Activated naive CD4-positive, alpha-beta T cell treated with anti-CD3 and anti-CD28 coated beads for 36 hours (primary cell): ENCODE measurements at regions of chr2 and their contacts with region 1.

Region 1: DNA sequence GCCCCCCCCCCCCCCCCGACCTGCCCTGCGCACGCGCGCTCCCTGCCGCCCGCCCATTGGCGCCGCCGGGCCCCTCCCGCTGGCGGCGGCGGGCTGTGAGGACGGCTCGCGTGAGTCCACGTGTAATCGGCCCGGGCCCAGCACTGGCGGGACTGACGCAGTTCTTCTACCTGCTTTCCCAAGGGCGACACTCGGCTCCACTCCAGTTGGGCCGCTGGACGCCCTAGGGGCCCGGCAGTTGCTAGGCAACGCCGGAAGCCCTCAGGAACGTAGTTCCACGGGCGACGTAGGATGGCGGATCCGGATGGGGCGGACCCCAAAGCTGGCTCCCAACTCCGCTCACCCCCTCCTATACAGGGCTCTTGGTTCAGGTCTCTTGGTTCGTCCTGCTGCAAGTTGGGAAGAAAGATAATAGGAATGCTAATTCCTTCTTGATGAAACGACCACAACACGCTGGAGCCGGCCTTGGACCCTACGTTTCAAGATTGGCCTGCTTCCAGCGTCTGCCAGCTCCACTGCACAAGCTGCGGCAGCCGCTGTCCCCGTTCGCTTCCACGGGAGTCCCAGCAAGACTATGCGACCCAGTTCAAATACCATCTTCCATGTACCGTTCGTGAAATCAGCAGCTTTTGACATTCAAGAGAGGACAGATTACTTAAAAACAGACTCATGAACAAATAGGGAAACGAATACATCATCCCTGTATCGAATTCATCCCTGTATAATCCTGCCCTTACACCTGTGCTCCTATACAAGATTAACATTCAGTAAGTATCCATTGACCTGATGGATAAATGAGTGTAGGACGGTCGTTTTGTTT is 415 bp upstream of the MCFD2 start:
- DNase-seq: peak; percentile 81
- H3K4me3 Mint-ChIP-seq: peak overlapping the region; percentile 82
- H3K27ac Mint-ChIP-seq: peak overlapping the region; percentile 68
- H3K4me1 Mint-ChIP-seq: peaks cover 48% of the 10 kb centered on the region
- H3K27me3 Mint-ChIP-seq: no peaks in the 10 kb centered on the region

Region 2: GRCh38 chr2:46929612-46930011 is 13.6 kb after region 1 on chr2:
- CTCF ChIA-PET with region 1: interaction called, 18 read pairs
- intact Hi-C with region 1: no loop called
- DNase-seq: no peak
- H3K4me3 Mint-ChIP-seq: no peak overlapping the region
- H3K27ac Mint-ChIP-seq: no peak overlapping the region
- H3K4me1 Mint-ChIP-seq: no peaks in the 10 kb centered on the region
- H3K27me3 Mint-ChIP-seq: no peaks in the 10 kb centered on the region

Region 3: DNA sequence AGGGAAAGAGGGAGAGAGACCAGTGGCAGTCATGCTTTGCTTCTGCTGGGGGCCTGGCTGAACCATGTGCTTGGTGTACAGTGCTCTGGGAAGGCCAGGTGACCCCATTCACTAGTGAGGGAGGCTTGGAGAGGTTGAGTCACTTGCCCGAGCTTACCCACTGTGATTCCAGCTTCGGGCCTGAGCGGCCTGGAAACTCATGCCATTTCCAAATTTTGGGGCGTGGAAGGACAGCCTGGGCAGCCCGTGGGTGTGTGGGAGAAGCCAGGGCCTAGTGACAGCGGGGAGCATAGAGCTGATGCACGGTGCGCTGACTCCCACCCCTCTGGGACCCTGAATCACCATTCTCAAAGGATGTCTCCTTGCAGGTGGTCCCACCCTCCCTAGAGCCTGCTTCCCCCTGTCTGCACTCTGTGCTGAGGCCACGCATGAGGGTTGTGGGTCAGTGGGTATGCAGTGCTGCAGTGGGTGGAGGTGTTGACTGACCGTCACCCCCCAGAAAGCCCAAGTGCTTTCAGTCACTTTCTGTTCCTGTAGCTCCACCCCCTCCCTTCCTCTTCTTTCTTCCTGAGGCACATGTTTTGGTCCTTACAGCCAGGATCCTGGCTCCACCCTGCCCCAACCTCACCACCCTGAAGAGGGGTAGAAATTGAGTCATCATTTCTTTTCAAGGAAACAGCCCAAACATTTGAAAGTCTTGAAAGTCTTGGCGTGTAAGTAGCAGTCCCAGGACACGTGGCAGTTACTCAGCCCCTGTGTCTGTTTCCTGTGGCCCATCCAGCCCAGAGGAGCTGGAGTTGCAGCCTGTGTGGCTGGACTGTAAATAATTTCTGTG is 68.8 kb after region 1 on chr2:
- CTCF ChIA-PET with region 1: interaction called, 3 read pairs
- intact Hi-C with region 1: loop called (anchors 1 kb)
- DNase-seq: peak; percentile 84
- H3K4me3 Mint-ChIP-seq: peak overlapping the region; percentile 8
- H3K27ac Mint-ChIP-seq: peak overlapping the region; percentile 92
- H3K4me1 Mint-ChIP-seq: peaks cover 69% of the 10 kb centered on the region
- H3K27me3 Mint-ChIP-seq: no peaks in the 10 kb centered on the region

Region 4: DNA sequence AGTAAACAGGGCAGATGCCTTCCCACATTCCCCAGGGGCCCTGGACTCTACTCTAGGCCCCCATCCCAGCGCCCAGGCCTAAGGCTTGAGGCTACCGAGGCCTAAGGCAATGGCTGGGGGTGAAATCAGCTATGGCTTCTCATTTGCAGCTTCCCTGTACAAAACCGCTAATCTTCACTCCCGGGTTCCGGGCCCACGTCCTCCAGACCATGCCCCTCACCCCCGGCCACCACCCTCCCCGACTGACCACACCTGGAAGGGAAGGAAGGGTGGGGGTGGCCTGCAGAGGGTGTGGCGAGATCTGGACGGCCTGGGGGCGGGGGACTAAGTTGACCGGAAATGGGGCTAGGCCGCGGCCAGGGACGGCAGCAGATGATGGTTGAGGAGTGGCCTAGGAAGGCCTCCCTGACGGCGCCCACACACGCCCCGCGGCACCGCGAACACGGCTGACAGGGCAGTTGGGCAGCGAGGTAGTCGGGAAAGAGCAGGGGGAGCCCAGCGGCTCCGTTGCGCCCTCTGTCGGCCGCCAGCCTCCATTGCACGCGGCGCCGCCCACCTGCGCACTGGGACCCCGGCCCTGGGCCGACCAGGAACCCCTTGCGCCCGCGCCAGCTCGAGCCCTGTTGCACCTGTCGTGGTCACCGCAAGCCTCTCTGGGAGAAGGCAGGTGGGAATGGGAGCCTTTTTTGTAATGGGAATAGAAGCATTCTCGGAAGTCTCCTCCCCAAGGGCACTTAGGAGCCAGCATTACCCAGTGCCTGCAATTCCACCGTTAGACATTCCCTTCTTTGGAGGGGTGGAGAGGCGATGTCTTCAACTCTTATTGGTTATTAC is 356.2 kb after region 1 on chr2:
- CTCF ChIA-PET with region 1: interaction called, 3 read pairs
- intact Hi-C with region 1: loop called (anchors 2 kb)
- DNase-seq: peak; percentile 48
- H3K4me3 Mint-ChIP-seq: peak overlapping the region; percentile 50
- H3K27ac Mint-ChIP-seq: no peak overlapping the region
- H3K4me1 Mint-ChIP-seq: peaks cover 2% of the 10 kb centered on the region
- H3K27me3 Mint-ChIP-seq: no peaks in the 10 kb centered on the region

Region 5: DNA sequence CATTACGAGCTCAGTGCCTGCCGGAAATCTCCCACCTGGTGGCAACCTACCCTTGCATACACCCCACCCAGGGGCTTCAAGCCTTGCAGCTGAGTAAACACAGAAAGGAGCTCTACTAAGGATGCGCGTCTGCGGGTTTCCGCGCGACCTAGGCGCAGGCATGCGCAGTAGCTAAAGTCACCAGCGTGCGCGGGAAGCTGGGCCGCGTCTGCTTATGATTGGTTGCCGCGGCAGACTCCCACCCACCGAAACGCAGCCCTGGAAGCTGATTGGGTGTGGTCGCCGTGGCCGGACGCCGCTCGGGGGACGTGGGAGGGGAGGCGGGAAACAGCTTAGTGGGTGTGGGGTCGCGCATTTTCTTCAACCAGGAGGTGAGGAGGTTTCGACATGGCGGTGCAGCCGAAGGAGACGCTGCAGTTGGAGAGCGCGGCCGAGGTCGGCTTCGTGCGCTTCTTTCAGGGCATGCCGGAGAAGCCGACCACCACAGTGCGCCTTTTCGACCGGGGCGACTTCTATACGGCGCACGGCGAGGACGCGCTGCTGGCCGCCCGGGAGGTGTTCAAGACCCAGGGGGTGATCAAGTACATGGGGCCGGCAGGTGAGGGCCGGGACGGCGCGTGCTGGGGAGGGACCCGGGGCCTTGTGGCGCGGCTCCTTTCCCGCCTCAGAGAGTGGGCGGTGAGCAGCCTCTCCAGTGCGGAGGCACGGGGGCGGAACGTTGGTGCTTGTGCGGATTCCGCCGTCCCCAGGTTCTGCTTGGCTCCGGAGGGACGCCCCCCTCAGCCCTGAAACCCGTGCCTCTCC is 487.0 kb after region 1 on chr2 and contains the start of gene MSH2:
- CTCF ChIA-PET with region 1: no interaction called
- intact Hi-C with region 1: loop called (anchors 5 kb)
- DNase-seq: peak; percentile 95
- H3K4me3 Mint-ChIP-seq: peak within 1 kb of the TSS; percentile 90
- H3K27ac Mint-ChIP-seq: peak within 1 kb of the TSS; percentile 97
- H3K4me1 Mint-ChIP-seq: peaks cover 40% of the 10 kb centered on the region
- H3K27me3 Mint-ChIP-seq: no peaks in the 10 kb centered on the region
- total RNA-seq, gene MSH2: 42.7 to 43.3 TPM